ENCODE measurements at regions of chr11 and their contacts with region 1.

Region 1: GRCh38 chr11:65314501-65315203 is at the start of gene CDC42EP2:
- DNase-seq: peak; percentile 87
- ATAC-seq: peak; percentile 90
- H3K4me3 Mint-ChIP-seq: peak within 1 kb of the TSS; percentile 73
- H3K27ac Mint-ChIP-seq: no peak within 1 kb of the TSS
- H3K4me1 Mint-ChIP-seq: peaks cover 11% of the 10 kb centered on the region
- H3K27me3 Mint-ChIP-seq: peaks cover 5% of the 10 kb centered on the region
- total RNA-seq, gene CDC42EP2: 0.91 to 0.93 TPM

Region 2: GRCh38 chr11:65134386-65135253 is 180.0 kb before region 1 on chr11 and contains the start of gene SYVN1:
- CTCF ChIA-PET with region 1: interaction called, 3 read pairs
- POLR2A ChIA-PET with region 1: no interaction called
- intact Hi-C with region 1: loop called in 1 of 2 experiments (anchors 1 kb)
- DNase-seq: peak; percentile 95
- ATAC-seq: peak; percentile 91
- H3K4me3 Mint-ChIP-seq: peak within 1 kb of the TSS; percentile 97
- H3K27ac Mint-ChIP-seq: peak within 1 kb of the TSS; percentile 97
- H3K4me1 Mint-ChIP-seq: peaks cover 27% of the 10 kb centered on the region
- H3K27me3 Mint-ChIP-seq: no peaks in the 10 kb centered on the region
- total RNA-seq, gene SYVN1: 24.3 to 31.1 TPM

Region 3: DNA sequence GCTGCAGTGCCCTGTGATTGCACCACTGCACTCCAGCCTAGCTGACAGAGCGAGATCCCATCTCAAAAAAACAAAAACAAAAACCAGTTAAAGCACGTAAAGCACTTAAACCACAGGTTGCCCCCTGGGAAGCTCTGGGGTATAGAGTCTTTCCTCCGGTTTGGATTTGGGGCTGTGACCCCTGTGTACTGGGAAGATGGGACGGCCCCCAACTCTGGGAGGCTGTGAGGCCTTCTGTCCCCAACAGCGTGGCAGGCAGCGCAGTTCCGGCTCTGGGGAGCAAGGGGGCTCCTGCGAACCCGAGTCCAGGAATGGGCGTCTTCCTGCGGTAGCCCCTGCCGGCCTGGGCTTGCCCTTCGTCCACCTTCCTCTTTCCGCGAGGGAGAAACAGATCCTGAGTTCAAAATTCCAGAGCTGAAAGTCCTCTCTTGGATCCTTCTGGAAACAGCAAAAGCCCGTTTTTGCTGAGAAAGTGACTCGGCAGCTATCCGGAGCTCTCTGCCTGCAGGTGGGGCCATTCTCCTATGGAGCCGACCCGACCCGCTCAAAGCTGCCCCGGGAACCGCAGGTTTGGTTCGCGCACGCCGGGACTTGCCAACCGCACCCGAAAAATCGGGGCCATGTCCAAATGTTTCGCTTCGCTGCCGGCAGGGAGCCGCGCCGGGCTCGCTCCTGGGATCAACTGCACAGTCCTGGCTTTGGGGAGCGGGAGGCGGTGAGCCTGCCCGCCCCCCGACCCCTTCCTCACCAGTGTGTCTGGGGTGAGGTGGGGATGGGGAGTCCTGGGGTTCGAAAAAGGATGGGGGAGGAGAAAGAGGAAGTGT is 89.2 kb before region 1 on chr11:
- CTCF ChIA-PET with region 1: interaction called, 87 read pairs
- POLR2A ChIA-PET with region 1: no interaction called
- intact Hi-C with region 1: loop called (anchors 1 kb)
- DNase-seq: peak; percentile 81
- ATAC-seq: peak; percentile 88
- H3K4me3 Mint-ChIP-seq: peak overlapping the region; percentile 71
- H3K27ac Mint-ChIP-seq: no peak overlapping the region
- H3K4me1 Mint-ChIP-seq: peaks cover 15% of the 10 kb centered on the region
- H3K27me3 Mint-ChIP-seq: peaks cover 21% of the 10 kb centered on the region

Region 4: GRCh38 chr11:65293909-65294381 is 20.7 kb before region 1 on chr11:
- CTCF ChIA-PET with region 1: interaction called, 24 read pairs
- POLR2A ChIA-PET with region 1: interaction called, 5 read pairs
- intact Hi-C with region 1: no loop called
- DNase-seq: no peak
- ATAC-seq: no peak
- H3K4me3 Mint-ChIP-seq: no peak overlapping the region
- H3K27ac Mint-ChIP-seq: no peak overlapping the region
- H3K4me1 Mint-ChIP-seq: no peaks in the 10 kb centered on the region
- H3K27me3 Mint-ChIP-seq: no peaks in the 10 kb centered on the region